B cell (primary cell): ENCODE measurements at regions of chrX and their contacts with region 1.

Region 1: DNA sequence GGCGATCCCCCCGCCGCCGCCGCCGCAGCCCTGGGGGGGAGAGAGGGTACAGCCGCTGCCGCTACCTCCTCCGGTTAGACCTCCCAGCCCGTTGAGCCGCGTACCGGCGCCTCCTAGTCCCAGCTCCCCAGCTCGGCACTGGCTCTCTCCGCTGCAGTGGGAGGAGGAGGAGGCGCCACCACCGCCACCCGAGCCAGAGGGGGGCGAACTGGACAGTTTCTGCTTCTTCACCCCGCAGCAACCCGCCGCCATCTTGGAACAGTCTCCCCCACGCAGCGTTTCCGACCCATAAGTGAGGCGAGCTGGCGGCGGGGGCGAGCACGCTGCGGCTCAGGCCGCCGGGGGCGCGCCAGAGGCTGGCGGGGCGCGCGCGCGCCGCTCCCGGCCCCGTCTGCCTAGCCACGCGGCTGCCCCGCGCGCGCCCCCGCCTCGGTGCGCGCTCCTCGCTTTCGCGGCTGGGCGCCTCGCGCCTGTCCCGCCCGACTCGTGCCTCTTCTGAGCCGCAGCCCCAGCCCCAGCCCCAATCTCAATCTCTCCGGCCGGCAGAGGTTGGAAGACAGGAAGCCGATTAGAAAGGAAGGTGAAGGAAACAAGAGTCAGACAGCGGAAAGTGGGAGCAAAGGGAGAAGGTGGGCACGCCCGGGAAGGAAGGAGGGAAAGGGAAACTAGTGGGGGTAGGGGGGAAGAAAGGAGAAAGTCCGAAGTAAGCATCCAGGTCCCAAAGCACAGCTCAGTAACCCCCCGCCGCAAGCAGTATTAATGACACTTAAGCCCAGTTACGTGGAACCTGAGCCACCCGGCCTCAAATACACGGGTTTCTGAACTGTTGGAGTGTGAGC is at the start of gene AMMECR1:
- DNase-seq: peak; percentile 90
- ATAC-seq: peak; percentile 81
- H3K4me3 ChIP-seq: peak within 1 kb of the TSS; percentile 52 to 93 (median 77)
- H3K4me3 Mint-ChIP-seq: peak within 1 kb of the TSS; percentile 96
- H3K27ac ChIP-seq: peak within 1 kb of the TSS; percentile 84 to 85
- H3K27ac Mint-ChIP-seq: peak within 1 kb of the TSS; percentile 98
- H3K4me1 ChIP-seq: peaks cover 7 to 14% of the 10 kb centered on the region in 2 donors
- H3K4me1 Mint-ChIP-seq: peaks cover 35% of the 10 kb centered on the region
- H3K27me3 ChIP-seq: no peaks in the 10 kb centered on the region
- H3K27me3 Mint-ChIP-seq: no peaks in the 10 kb centered on the region
- CTCF ChIP-seq: no peak
- total RNA-seq, gene AMMECR1: 10.6 and 12.7 TPM in 2 replicates

Region 2: DNA sequence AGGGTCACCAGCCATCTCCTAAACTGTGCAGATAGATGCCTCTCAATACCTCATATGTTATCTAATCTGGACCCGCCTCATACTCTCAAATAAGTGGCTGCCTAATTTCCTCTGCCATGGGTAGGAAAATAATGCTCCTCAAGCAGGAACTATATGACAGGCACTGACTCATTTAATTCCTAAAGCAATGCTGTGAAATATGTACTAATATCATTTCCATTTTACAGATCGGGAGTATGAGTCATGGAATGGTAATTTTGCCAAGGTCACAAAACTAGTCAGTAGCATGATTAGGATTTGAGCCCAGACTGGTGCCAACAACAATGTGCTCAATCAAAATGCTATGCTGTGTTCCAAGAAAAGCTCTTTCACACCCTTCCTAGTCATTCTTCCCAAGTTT is 784.4 kb before region 1 on chrX:
- CTCF ChIA-PET with region 1: no interaction called
- POLR2A ChIA-PET with region 1: no interaction called
- intact Hi-C with region 1: loop called (anchors 5 kb)
- DNase-seq: no peak
- ATAC-seq: no peak
- H3K4me3 ChIP-seq: no peak overlapping the region
- H3K4me3 Mint-ChIP-seq: peak overlapping the region; percentile 23
- H3K27ac ChIP-seq: no peak overlapping the region
- H3K27ac Mint-ChIP-seq: no peak overlapping the region
- H3K4me1 ChIP-seq: peaks cover 18 to 20% of the 10 kb centered on the region in 2 donors
- H3K4me1 Mint-ChIP-seq: peaks cover 35% of the 10 kb centered on the region
- H3K27me3 ChIP-seq: no peaks in the 10 kb centered on the region
- H3K27me3 Mint-ChIP-seq: no peaks in the 10 kb centered on the region
- CTCF ChIP-seq: no peak

Region 3: GRCh38 chrX:110002300-110003166 is 315.5 kb before region 1 on chrX and contains the start of gene TMEM164:
- CTCF ChIA-PET with region 1: no interaction called
- POLR2A ChIA-PET with region 1: interaction called, 3 read pairs
- intact Hi-C with region 1: loop called (anchors 2 kb)
- DNase-seq: peak; percentile 88
- ATAC-seq: peak; percentile 76
- H3K4me3 ChIP-seq: peak within 1 kb of the TSS in 4 of 5 experiments; percentile 57 to 71 (median 65)
- H3K4me3 Mint-ChIP-seq: peak within 1 kb of the TSS; percentile 93
- H3K27ac ChIP-seq: peak within 1 kb of the TSS; percentile 53 to 61
- H3K27ac Mint-ChIP-seq: peak within 1 kb of the TSS; percentile 96
- H3K4me1 ChIP-seq: peaks cover 7 to 15% of the 10 kb centered on the region in 2 donors
- H3K4me1 Mint-ChIP-seq: peaks cover 25% of the 10 kb centered on the region
- H3K27me3 ChIP-seq: no peaks in the 10 kb centered on the region
- H3K27me3 Mint-ChIP-seq: no peaks in the 10 kb centered on the region
- CTCF ChIP-seq: no peak
- total RNA-seq, gene TMEM164: 24.5 and 26.6 TPM in 2 replicates

Region 4: DNA sequence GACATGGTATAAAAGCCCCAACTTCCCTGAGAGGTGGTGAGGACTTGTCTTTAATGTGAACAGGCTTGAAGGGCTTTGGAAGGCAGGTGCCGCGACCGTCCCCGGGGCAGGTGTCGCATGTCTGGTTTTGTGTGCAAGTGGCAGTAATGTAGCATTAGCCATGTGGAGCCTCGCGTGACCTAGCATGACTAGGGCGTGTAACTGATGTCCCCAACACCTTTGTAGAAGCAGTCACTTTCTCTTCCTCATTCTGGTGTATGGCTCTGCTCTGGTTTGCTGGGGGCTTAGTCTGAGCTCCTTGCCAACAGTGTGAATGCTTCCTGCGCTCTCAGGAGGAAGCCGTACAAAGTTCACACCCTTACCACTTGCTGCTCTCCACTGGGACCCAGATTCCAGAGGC is 145.8 kb before region 1 on chrX:
- CTCF ChIA-PET with region 1: no interaction called
- POLR2A ChIA-PET with region 1: no interaction called
- intact Hi-C with region 1: loop called (anchors 1 kb)
- DNase-seq: peak; percentile 88
- ATAC-seq: peak; percentile 97
- H3K4me3 ChIP-seq: no peak overlapping the region
- H3K4me3 Mint-ChIP-seq: peak overlapping the region; percentile 53
- H3K27ac ChIP-seq: peak overlapping the region; percentile 67 to 81
- H3K27ac Mint-ChIP-seq: peak overlapping the region; percentile 85
- H3K4me1 ChIP-seq: peaks cover 12 to 30% of the 10 kb centered on the region in 2 donors
- H3K4me1 Mint-ChIP-seq: peaks cover 25% of the 10 kb centered on the region
- H3K27me3 ChIP-seq: no peaks in the 10 kb centered on the region
- H3K27me3 Mint-ChIP-seq: no peaks in the 10 kb centered on the region
- CTCF ChIP-seq: no peak

Region 5: DNA sequence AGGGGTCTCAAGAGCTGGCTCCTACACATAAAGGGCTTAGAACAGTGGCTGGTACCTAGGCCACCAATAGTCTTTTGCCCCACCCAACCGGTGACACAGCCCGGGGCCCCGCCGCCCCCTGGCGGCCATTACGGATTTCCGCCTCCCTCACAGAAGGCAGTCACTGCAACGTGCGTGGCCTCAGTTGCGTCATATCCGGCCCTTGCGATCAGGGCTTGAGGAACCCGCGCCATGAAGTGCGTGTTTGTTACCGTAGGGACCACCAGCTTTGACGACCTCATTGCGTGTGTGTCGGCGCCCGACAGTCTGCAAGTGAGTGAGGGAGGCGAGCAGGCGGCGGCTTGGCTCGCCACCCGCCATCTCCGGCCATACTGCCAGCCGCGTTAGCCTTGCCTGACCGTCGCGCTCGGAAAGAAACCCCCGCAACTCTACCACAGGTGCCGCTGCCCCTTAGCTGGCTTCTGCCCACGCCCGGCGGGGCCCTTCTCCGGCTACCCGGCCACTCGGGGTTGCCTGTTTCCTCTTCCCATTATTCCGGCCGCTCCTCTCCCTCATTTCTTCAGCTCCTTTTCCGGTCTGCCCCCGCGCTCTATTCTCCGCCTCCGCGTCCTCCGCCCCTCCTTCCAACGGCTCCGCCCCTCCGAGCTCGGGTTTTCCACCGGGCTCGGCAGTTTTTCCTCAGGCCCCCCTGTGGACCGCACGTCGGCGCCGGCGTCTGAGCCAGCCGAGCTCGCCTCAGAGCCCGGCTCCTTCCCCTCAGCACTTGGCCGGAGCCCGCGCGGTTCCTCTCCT is 1363.1 kb after region 1 on chrX and contains the start of gene ALG13:
- CTCF ChIA-PET with region 1: no interaction called
- POLR2A ChIA-PET with region 1: no interaction called
- intact Hi-C with region 1: loop called (anchors 5 kb)
- DNase-seq: peak; percentile 94
- ATAC-seq: peak; percentile 86
- H3K4me3 ChIP-seq: peak within 1 kb of the TSS; percentile 47 to 97 (median 86)
- H3K4me3 Mint-ChIP-seq: peak within 1 kb of the TSS; percentile 92
- H3K27ac ChIP-seq: peak within 1 kb of the TSS; percentile 98 to 100
- H3K27ac Mint-ChIP-seq: peak within 1 kb of the TSS; percentile 97
- H3K4me1 ChIP-seq: peaks cover 8 to 14% of the 10 kb centered on the region in 2 donors
- H3K4me1 Mint-ChIP-seq: peaks cover 25% of the 10 kb centered on the region
- H3K27me3 ChIP-seq: no peaks in the 10 kb centered on the region
- H3K27me3 Mint-ChIP-seq: no peaks in the 10 kb centered on the region
- CTCF ChIP-seq: peak; percentile 66
- total RNA-seq, gene ALG13: 134 and 138 TPM in 2 replicates